Endothelial cell of umbilical vein (primary cell): ENCODE measurements at regions of chr12 and their contacts with region 1.

Region 1: GRCh38 chr12:67648521-67649260 is at the start of gene DYRK2:
- DNase-seq: peak; percentile 76
- H3K4me3 ChIP-seq: peak within 1 kb of the TSS; percentile 58 to 90 (median 82)
- H3K27ac ChIP-seq: peak within 1 kb of the TSS; percentile 58
- H3K4me1 ChIP-seq: peaks cover 11% of the 10 kb centered on the region
- H3K27me3 ChIP-seq: no peaks in the 10 kb centered on the region
- CTCF ChIP-seq: no peak
- POLR2A ChIP-seq: peak; percentile 77
- total RNA-seq, gene DYRK2: 11.0 and 13.7 TPM in 2 replicates

Region 2: GRCh38 chr12:67572492-67572891 is 76.2 kb before region 1 on chr12:
- CTCF ChIA-PET with region 1: no interaction called
- POLR2A ChIA-PET with region 1: no interaction called
- dilution Hi-C with region 1: no loop called
- intact Hi-C with region 1: no loop called
- DNase-seq: no peak
- H3K4me3 ChIP-seq: no peak overlapping the region
- H3K27ac ChIP-seq: no peak overlapping the region
- H3K4me1 ChIP-seq: no peaks in the 10 kb centered on the region
- H3K27me3 ChIP-seq: no peaks in the 10 kb centered on the region
- CTCF ChIP-seq: no peak
- POLR2A ChIP-seq: no peak

Region 3: GRCh38 chr12:67705394-67706370 is 57.0 kb after region 1 on chr12:
- CTCF ChIA-PET with region 1: no interaction called
- POLR2A ChIA-PET with region 1: no interaction called
- dilution Hi-C with region 1: no loop called
- intact Hi-C with region 1: loop called (anchors 1 kb)
- DNase-seq: peak; percentile 87
- H3K4me3 ChIP-seq: no peak overlapping the region
- H3K27ac ChIP-seq: no peak overlapping the region
- H3K4me1 ChIP-seq: peaks cover 11% of the 10 kb centered on the region
- H3K27me3 ChIP-seq: peaks cover 26 to 40% of the 10 kb centered on the region in 2 experiments
- CTCF ChIP-seq: no peak
- POLR2A ChIP-seq: no peak

Region 4: DNA sequence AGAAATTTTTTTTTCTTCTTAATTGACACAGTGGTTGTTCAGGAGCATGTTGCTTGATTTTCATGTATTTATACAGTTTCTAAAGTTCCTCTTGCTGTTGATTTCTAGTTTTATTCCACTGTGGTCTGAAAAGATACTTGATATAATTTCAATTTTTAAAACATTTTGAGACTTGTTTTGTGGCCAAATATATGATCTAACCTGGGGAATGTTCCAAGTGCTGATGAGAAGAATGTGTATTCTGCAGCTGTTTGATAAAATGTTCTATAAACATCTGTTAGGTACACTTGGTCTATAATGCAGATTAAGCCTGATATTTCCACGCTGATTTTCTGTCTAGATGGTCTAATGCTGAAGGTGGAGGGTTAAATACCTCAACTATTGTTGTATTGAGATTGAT is 189.2 kb after region 1 on chr12:
- CTCF ChIA-PET with region 1: no interaction called
- POLR2A ChIA-PET with region 1: no interaction called
- dilution Hi-C with region 1: no loop called
- intact Hi-C with region 1: no loop called
- DNase-seq: no peak
- H3K4me3 ChIP-seq: no peak overlapping the region
- H3K27ac ChIP-seq: no peak overlapping the region
- H3K4me1 ChIP-seq: no peaks in the 10 kb centered on the region
- H3K27me3 ChIP-seq: no peaks in the 10 kb centered on the region
- CTCF ChIP-seq: no peak
- POLR2A ChIP-seq: no peak